Dorsolateral prefrontal cortex (tissue), 120 donors: ENCODE measurements at regions of chr14 and their contacts with region 1.

Region 1: GRCh38 chr14:75069045-75069810 is at the start of gene ZC2HC1C:
- DNase-seq: peak; percentile 90 to 98 (median 94)
- H3K4me3 ChIP-seq: peak within 1 kb of the TSS; percentile 50 to 95 (median 80)
- H3K27ac ChIP-seq: peak within 1 kb of the TSS; percentile 54 to 99 (median 93)
- H3K27me3 ChIP-seq: no peaks in the 10 kb centered on the region
- CTCF ChIP-seq: peak in 26 of 56 donors; percentile 4 to 38 (median 22)
- total RNA-seq, gene ZC2HC1C: 3.8 to 18.1 (median 7.8) TPM

Region 2: DNA sequence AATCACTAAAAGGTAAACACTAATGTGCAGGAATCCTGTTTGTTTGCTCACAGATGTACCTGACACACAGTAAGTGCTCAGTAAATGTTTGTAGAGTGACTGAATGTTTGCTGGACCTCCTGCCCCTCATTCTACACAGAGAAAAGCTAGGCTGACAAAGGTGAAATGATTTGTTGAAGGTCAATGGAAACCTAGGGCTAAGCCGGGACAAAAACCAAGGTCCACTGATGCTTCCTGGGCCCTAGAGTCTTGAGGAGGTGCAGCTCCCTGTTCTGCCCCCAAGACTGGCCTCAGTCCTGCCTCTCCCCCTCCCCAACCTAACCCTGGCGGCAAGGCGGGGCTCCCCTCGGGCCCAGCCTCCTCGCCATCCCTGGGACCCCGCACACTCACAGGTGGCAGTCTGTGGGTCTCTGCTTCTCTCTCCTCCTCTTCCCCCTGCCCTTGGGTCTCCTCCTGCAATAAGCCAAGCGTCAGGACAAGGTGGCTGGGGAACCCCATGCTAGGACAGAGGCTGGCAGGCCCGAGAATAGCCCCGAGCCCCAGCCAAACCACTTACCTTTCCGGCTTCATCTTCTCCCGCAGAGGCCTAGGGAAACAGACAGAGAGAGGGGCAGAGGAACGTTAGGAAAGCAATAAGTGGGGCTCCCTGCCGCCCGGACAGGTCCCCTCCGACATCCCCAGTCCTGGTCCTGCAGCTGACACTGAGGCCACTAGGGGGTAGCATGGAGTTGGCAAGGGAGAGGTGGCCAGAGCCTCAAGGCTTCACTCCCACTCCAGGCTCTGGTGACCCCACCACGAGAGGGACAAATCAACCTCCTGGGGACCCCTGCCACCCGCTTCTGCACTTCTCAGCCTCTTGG is 123.2 kb before region 1 on chr14:
- intact Hi-C with region 1: loop called in 1 of 2 experiments (anchors 5 kb)
- DNase-seq: peak in 9 of 10 donors; percentile 63 to 82 (median 73)
- H3K4me3 ChIP-seq: peak overlapping the region in 20 of 59 donors; percentile 0 to 40 (median 18)
- H3K27ac ChIP-seq: peak overlapping the region in 33 of 59 donors; percentile 0 to 76 (median 50)
- H3K27me3 ChIP-seq: peaks cover 0 to 7% (median 0%) of the 10 kb centered on the region in 45 donors
- CTCF ChIP-seq: peak; percentile 53 to 95 (median 91)

Region 3: DNA sequence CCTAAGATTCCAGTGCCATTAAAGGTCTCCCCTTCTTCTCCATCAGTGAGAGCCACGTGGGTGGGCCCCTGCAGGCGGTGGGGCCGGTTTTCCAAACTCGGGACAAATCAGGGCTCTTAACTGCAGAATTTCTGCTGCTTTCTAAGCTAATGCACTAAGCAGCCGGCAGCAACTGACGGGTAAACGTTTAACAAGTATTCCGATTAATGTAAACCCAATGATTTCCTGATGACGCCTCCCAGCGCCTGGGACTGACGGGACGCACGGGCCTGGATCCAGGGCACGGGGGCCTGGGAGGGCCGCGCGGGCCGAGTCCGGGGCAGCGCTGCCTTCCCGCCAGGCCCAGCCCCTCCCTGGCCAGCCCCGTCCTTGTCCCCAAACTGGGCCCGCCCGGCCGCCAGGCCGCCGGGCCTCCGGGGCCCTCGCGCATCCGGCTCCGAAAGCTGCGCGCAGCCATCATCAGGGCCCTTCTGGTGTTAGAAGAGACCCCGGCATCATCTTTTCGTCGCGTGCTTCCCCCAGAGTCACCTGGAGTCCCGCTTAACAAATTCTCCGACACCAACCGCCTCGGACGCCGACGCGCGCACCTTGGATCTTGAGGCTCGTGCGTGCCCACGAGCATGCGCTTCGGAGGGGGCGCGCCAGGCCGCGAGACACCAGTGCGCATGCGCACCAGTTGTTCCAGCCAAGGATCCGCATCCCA is 18.2 kb before region 1 on chr14 and contains the start of gene MLH3:
- intact Hi-C with region 1: loop called in 1 of 2 experiments (anchors 2 kb)
- DNase-seq: peak; percentile 68 to 90 (median 80)
- H3K4me3 ChIP-seq: peak within 1 kb of the TSS; percentile 59 to 86 (median 77)
- H3K27ac ChIP-seq: peak within 1 kb of the TSS; percentile 60 to 97 (median 91)
- H3K27me3 ChIP-seq: no peaks in the 10 kb centered on the region
- CTCF ChIP-seq: peak in 36 of 56 donors; percentile 6 to 55 (median 27)
- total RNA-seq, gene MLH3: 31.8 to 59.8 (median 43.1) TPM

Region 4: GRCh38 chr14:75123993-75124392 is 54.8 kb after region 1 on chr14:
- intact Hi-C with region 1: no loop called
- DNase-seq: no peak
- H3K4me3 ChIP-seq: no peak overlapping the region
- H3K27ac ChIP-seq: peak overlapping the region in 4 of 59 donors; percentile 7 to 60 (median 24)
- H3K27me3 ChIP-seq: no peaks in the 10 kb centered on the region
- CTCF ChIP-seq: no peak